Natural killer cell (primary cell): ENCODE measurements at regions of chr11 and their contacts with region 1.

Region 1: GRCh38 chr11:67705264-67705663 is 30.8 kb upstream of the ALDH3B2 start:
- DNase-seq: no peak
- ATAC-seq: no peak
- H3K4me3 ChIP-seq: no peak overlapping the region
- H3K4me3 Mint-ChIP-seq: no peak overlapping the region
- H3K27ac ChIP-seq: no peak overlapping the region
- H3K27ac Mint-ChIP-seq: no peak overlapping the region
- H3K4me1 ChIP-seq: no peaks in the 10 kb centered on the region
- H3K4me1 Mint-ChIP-seq: no peaks in the 10 kb centered on the region
- H3K27me3 ChIP-seq: no peaks in the 10 kb centered on the region
- H3K27me3 Mint-ChIP-seq: peaks cover 11 to 20% of the 10 kb centered on the region in 2 donors
- CTCF ChIP-seq: no peak

Region 2: GRCh38 chr11:67630228-67630942 is 74.9 kb before region 1 on chr11:
- intact Hi-C with region 1: loop called (anchors 10 kb)
- DNase-seq: peak; percentile 93 to 96
- ATAC-seq: peak; percentile 78 to 90 (median 82)
- H3K4me3 ChIP-seq: peak overlapping the region; percentile 59
- H3K4me3 Mint-ChIP-seq: peak overlapping the region; percentile 86
- H3K27ac ChIP-seq: peak overlapping the region; percentile 81
- H3K27ac Mint-ChIP-seq: peak overlapping the region; percentile 71 to 95
- H3K4me1 ChIP-seq: peaks cover 23% of the 10 kb centered on the region
- H3K4me1 Mint-ChIP-seq: peaks cover 5 to 22% of the 10 kb centered on the region in 2 donors
- H3K27me3 ChIP-seq: no peaks in the 10 kb centered on the region
- H3K27me3 Mint-ChIP-seq: no peaks in the 10 kb centered on the region
- CTCF ChIP-seq: peak; percentile 76

Region 3: DNA sequence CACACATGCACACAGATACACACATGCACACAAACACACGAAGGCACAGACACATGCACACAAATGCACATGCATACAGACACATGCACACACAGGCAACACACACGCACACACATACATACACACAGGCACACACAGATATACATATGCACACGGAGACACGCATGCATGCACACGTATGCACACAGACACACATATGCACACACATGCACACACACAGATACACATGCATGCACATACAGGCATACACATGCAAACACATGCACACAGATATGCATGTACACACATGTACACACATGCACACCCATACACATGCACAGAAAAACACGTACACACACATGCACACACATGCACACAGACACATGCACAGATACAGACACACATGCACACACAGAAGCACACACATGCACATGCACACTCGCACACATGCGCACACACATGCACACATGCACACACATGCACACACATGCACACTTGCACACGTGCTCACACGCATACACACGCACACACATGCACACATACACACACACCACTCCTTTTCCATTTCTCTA is 40.0 kb after region 1 on chr11:
- intact Hi-C with region 1: no loop called
- DNase-seq: no peak
- ATAC-seq: peak in 1 of 3 donors; percentile 46
- H3K4me3 ChIP-seq: no peak overlapping the region
- H3K4me3 Mint-ChIP-seq: no peak overlapping the region
- H3K27ac ChIP-seq: no peak overlapping the region
- H3K27ac Mint-ChIP-seq: no peak overlapping the region
- H3K4me1 ChIP-seq: no peaks in the 10 kb centered on the region
- H3K4me1 Mint-ChIP-seq: no peaks in the 10 kb centered on the region
- H3K27me3 ChIP-seq: no peaks in the 10 kb centered on the region
- H3K27me3 Mint-ChIP-seq: peaks cover 0 to 8% of the 10 kb centered on the region in 2 donors
- CTCF ChIP-seq: no peak